ENCODE measurements at regions of chr15 and their contacts with region 1.

Region 1: GRCh38 chr15:67839929-67840748 is at the start of gene RNU6-1:
- DNase-seq: peak; percentile 92 to 97 (median 96)
- ATAC-seq: peak; percentile 78
- H3K4me3 ChIP-seq: peak within 1 kb of the TSS; percentile 87 to 89
- H3K4me3 Mint-ChIP-seq: peak within 1 kb of the TSS; percentile 91
- H3K27ac ChIP-seq: peak within 1 kb of the TSS; percentile 91 to 94
- H3K27ac Mint-ChIP-seq: peak within 1 kb of the TSS; percentile 97
- H3K4me1 ChIP-seq: peaks cover 31% of the 10 kb centered on the region
- H3K4me1 Mint-ChIP-seq: peaks cover 34% of the 10 kb centered on the region
- H3K27me3 ChIP-seq: peaks cover 11% of the 10 kb centered on the region in 2 experiments
- H3K27me3 Mint-ChIP-seq: peaks cover 5% of the 10 kb centered on the region
- CTCF ChIP-seq: no peak
- total RNA-seq, gene RNU6-1: not detected

Region 2: DNA sequence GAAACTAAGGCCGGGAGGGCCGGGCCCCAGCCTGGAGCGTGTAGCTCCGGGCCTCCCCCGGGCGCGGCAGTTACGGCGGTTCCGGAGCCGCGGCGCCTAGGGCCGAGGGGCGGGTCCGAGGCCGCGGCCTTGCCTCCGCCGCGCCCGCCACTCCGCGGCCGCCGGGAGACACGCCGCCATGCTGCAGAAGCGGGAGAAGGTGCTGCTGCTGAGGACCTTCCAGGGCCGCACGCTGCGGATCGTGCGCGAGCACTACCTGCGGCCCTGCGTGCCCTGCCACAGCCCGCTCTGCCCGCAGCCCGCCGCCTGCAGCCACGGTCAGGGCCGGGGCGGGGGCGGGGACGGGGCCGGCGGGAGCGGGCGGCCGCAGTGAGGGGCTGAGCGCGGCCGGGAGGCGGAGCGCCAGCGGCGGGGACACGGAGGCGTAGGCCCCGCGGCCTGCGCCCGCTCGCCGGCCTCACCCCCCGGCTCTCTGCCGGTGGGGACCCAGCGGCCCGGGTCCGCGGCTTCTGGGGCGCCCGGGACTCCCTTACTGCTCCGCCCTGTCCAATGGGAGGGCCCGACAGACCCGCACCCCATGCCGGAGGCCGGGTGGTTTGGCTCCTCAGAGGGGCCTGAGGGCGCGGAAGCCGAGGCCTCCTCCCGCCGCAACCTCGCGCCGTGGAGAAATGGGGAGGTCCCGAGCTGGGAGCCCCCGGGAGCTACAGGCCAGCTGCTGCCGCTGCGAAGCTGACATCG is 1546.6 kb before region 1 on chr15 and contains the start of gene DIS3L:
- CTCF ChIA-PET with region 1: no interaction called
- POLR2A ChIA-PET with region 1: no interaction called
- intact Hi-C with region 1: loop called in 1 of 2 experiments (anchors 5 kb)
- DNase-seq: peak; percentile 21 to 83 (median 60)
- ATAC-seq: peak; percentile 72
- H3K4me3 ChIP-seq: peak within 1 kb of the TSS; percentile 67 to 72
- H3K4me3 Mint-ChIP-seq: peak within 1 kb of the TSS; percentile 86
- H3K27ac ChIP-seq: peak within 1 kb of the TSS; percentile 86 to 95
- H3K27ac Mint-ChIP-seq: peak within 1 kb of the TSS; percentile 93
- H3K4me1 ChIP-seq: peaks cover 39% of the 10 kb centered on the region
- H3K4me1 Mint-ChIP-seq: peaks cover 49% of the 10 kb centered on the region
- H3K27me3 ChIP-seq: no peaks in the 10 kb centered on the region
- H3K27me3 Mint-ChIP-seq: no peaks in the 10 kb centered on the region
- CTCF ChIP-seq: no peak
- total RNA-seq, gene DIS3L: 16.6 to 18.8 TPM

Region 3: DNA sequence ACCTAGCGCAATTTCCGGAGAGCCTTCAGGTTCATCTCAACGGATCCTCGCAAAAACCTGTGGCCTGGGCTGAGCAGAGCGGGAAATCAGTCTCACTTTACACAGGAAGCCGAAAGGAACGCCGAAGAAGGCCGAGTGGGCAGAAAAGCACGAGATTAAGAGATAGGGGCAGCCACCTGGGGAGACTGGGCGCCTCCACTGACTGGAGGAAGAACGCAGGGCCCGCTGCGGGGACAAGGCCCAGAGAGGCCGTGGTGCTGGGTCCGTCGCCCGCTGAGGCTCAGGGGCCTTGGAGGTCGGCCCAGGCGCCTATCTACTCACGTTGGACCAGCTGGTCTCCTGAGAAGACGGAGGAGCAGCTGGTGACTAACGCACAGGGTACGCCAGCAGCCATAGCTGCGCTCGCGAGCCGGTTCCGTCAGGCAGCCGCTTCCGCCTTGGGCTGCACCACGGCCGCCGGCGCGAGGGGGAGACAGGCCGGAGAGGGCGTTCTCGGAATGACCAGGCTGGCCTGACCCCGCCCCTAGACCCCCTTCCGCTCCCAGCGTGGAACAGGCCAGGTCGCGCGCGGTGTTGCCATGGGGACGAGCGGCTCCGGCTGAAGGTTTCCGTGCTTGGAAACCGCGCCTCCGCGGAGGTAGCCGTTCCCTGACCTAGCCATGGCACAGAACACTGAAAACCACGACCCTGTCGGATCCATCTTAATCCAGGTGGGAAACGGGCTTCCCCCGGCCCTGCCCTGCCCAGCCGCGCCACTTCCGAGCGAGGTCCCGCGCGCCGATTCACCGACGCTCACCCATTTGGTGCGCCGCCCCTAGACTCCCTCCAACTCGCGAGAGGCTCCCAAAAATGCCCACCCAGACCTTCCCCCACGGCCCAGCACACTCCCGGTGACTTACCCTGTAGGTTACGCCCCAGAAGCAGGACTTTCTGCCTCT is 585.6 kb before region 1 on chr15 and contains the starts of genes AAGAB and IQCH:
- CTCF ChIA-PET with region 1: no interaction called
- POLR2A ChIA-PET with region 1: no interaction called
- intact Hi-C with region 1: loop called (anchors 2 to 5 kb)
- DNase-seq: peak; percentile 93 to 99 (median 97)
- ATAC-seq: peak; percentile 93
- H3K4me3 ChIP-seq: peak within 1 kb of the TSS; percentile 78 to 92
- H3K4me3 Mint-ChIP-seq: peak within 1 kb of the TSS; percentile 98
- H3K27ac ChIP-seq: peak within 1 kb of the TSS; percentile 79 to 86
- H3K27ac Mint-ChIP-seq: peak within 1 kb of the TSS; percentile 98
- H3K4me1 ChIP-seq: peaks cover 13% of the 10 kb centered on the region
- H3K4me1 Mint-ChIP-seq: peaks cover 44% of the 10 kb centered on the region
- H3K27me3 ChIP-seq: peaks cover 0 to 3% of the 10 kb centered on the region in 2 experiments
- H3K27me3 Mint-ChIP-seq: no peaks in the 10 kb centered on the region
- CTCF ChIP-seq: no peak
- total RNA-seq, gene AAGAB: 17.0 to 18.0 TPM
- total RNA-seq, gene IQCH: 0.39 to 0.60 TPM

Region 4: DNA sequence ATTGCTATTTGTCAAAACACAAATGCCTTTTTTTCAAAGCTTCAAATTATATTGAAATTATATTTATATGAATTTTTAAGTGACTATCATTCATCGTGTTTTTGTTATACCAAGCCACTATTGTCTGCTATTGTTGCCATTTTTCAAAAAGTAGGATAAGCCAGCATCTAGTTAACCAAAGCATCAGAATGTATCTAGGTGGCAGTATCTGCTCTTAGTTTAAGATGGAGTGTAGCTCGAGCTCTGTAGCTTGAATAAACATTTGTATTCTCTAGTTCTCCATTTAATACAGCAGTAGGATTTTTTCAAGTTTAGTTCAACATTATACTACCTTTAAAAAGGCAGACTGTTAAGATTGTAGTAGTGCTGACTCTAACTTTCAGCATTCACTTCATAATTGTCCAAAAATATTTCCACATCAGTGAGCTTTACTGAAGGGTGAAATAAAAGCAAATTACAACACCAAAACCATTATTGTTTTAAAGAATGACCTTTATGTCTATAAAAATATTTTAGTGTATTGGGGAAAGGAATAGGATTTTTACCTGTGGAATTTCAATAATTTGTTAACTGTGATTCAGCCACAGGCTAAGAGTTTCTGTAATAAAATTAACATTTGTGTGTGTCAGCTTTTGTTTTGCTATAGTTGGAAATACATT is 338.8 kb before region 1 on chr15:
- CTCF ChIA-PET with region 1: interaction called, 15 read pairs
- POLR2A ChIA-PET with region 1: no interaction called
- intact Hi-C with region 1: loop called (anchors 1 to 2 kb)
- DNase-seq: peak in 2 of 9 experiments; percentile 24 to 38
- ATAC-seq: no peak
- H3K4me3 ChIP-seq: no peak overlapping the region
- H3K4me3 Mint-ChIP-seq: no peak overlapping the region
- H3K27ac ChIP-seq: no peak overlapping the region
- H3K27ac Mint-ChIP-seq: no peak overlapping the region
- H3K4me1 ChIP-seq: no peaks in the 10 kb centered on the region
- H3K4me1 Mint-ChIP-seq: no peaks in the 10 kb centered on the region
- H3K27me3 ChIP-seq: no peaks in the 10 kb centered on the region
- H3K27me3 Mint-ChIP-seq: no peaks in the 10 kb centered on the region
- CTCF ChIP-seq: peak; percentile 27

Region 5: GRCh38 chr15:67784090-67784781 is 55.9 kb before region 1 on chr15:
- CTCF ChIA-PET with region 1: interaction called, 34 read pairs
- POLR2A ChIA-PET with region 1: interaction called, 10 read pairs
- intact Hi-C with region 1: loop called (anchors 1 kb)
- DNase-seq: peak in 3 of 9 experiments; percentile 32 to 61 (median 49)
- ATAC-seq: peak; percentile 27
- H3K4me3 ChIP-seq: no peak overlapping the region
- H3K4me3 Mint-ChIP-seq: peak overlapping the region; percentile 27
- H3K27ac ChIP-seq: peak overlapping the region in 1 of 2 experiments; percentile 12
- H3K27ac Mint-ChIP-seq: peak overlapping the region; percentile 85
- H3K4me1 ChIP-seq: peaks cover 27% of the 10 kb centered on the region
- H3K4me1 Mint-ChIP-seq: peaks cover 37% of the 10 kb centered on the region
- H3K27me3 ChIP-seq: no peaks in the 10 kb centered on the region
- H3K27me3 Mint-ChIP-seq: no peaks in the 10 kb centered on the region
- CTCF ChIP-seq: no peak

Region 6: DNA sequence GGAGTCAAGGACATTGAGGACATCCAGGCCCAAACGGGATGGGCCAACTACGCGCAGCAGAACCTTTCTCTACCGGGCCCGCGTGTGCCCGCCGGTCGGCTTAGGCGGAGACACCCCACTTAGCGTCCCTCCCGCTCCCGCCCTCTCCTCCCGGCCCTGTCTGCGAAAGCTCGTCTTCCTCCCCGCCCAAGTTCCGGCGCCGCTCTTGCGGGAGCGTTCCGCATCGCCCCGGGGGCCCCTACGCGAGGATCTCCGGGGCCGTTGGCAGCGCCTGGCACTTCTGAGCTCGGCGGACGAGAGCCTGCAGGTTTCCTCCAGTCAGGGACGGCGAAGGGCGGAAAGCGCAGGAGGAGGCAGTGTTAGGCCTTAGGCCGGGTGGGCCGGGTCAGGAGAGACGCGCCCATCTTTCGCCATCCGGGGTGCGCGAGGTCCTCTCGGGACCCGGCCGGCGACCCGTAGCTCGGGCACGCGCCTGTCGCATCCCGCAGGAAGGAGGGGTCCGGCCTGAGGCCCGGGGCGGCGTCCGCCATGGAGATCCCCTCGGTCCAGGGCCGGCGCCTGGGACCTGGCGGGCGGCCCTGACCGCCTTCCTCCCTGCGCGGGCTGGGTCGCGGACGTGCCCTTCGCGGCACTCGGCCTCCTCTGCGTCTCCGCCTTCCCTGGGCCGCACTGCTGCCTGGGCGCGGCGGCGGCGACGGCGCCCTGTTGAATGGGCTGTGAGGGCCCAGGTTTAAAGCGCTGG is 437.6 kb after region 1 on chr15 and contains the start of gene FEM1B:
- CTCF ChIA-PET with region 1: no interaction called
- POLR2A ChIA-PET with region 1: interaction called, 4 read pairs
- intact Hi-C with region 1: loop called (anchors 1 to 2 kb)
- DNase-seq: peak; percentile 73 to 96 (median 86)
- ATAC-seq: peak; percentile 76
- H3K4me3 ChIP-seq: peak within 1 kb of the TSS; percentile 90 to 93
- H3K4me3 Mint-ChIP-seq: peak within 1 kb of the TSS; percentile 98
- H3K27ac ChIP-seq: peak within 1 kb of the TSS; percentile 92 to 98
- H3K27ac Mint-ChIP-seq: peak within 1 kb of the TSS; percentile 98
- H3K4me1 ChIP-seq: peaks cover 47% of the 10 kb centered on the region
- H3K4me1 Mint-ChIP-seq: peaks cover 60% of the 10 kb centered on the region
- H3K27me3 ChIP-seq: no peaks in the 10 kb centered on the region
- H3K27me3 Mint-ChIP-seq: no peaks in the 10 kb centered on the region
- CTCF ChIP-seq: no peak
- total RNA-seq, gene FEM1B: 89.7 to 90.6 TPM

Region 7: GRCh38 chr15:68559345-68560310 is 719.5 kb after region 1 on chr15:
- CTCF ChIA-PET with region 1: no interaction called
- POLR2A ChIA-PET with region 1: no interaction called
- intact Hi-C with region 1: no loop called
- DNase-seq: peak; percentile 50 to 84 (median 70)
- ATAC-seq: peak; percentile 95
- H3K4me3 ChIP-seq: peak overlapping the region; percentile 30 to 66
- H3K4me3 Mint-ChIP-seq: peak overlapping the region; percentile 75
- H3K27ac ChIP-seq: no peak overlapping the region
- H3K27ac Mint-ChIP-seq: no peak overlapping the region
- H3K4me1 ChIP-seq: peaks cover 8% of the 10 kb centered on the region
- H3K4me1 Mint-ChIP-seq: peaks cover 18% of the 10 kb centered on the region
- H3K27me3 ChIP-seq: peaks cover 0 to 15% of the 10 kb centered on the region in 2 experiments
- H3K27me3 Mint-ChIP-seq: peaks cover 49% of the 10 kb centered on the region
- CTCF ChIP-seq: peak; percentile 92

Region 8: GRCh38 chr15:68691705-68692104 is 851.6 kb after region 1 on chr15:
- CTCF ChIA-PET with region 1: no interaction called
- POLR2A ChIA-PET with region 1: no interaction called
- intact Hi-C with region 1: no loop called
- DNase-seq: no peak
- ATAC-seq: no peak
- H3K4me3 ChIP-seq: no peak overlapping the region
- H3K4me3 Mint-ChIP-seq: no peak overlapping the region
- H3K27ac ChIP-seq: no peak overlapping the region
- H3K27ac Mint-ChIP-seq: no peak overlapping the region
- H3K4me1 ChIP-seq: peaks cover 8% of the 10 kb centered on the region
- H3K4me1 Mint-ChIP-seq: peaks cover 8% of the 10 kb centered on the region
- H3K27me3 ChIP-seq: no peaks in the 10 kb centered on the region
- H3K27me3 Mint-ChIP-seq: peaks cover 4% of the 10 kb centered on the region
- CTCF ChIP-seq: no peak